Heart right ventricle (tissue), 16 donors: ENCODE measurements at regions of chr19 and their contacts with region 1.

Region 1: GRCh38 chr19:14054721-14055120 is 7.2 kb downstream of the PALM3 start:
- DNase-seq: no peak
- ATAC-seq: peak in 1 of 8 donors; percentile 10
- H3K4me3 ChIP-seq: no peak overlapping the region
- H3K27ac ChIP-seq: no peak overlapping the region
- H3K4me1 ChIP-seq: peaks cover 0 to 17% (median 5%) of the 10 kb centered on the region in 9 donors
- H3K27me3 ChIP-seq: peaks cover 0 to 34% (median 22%) of the 10 kb centered on the region in 7 donors
- CTCF ChIP-seq: no peak

Region 2: DNA sequence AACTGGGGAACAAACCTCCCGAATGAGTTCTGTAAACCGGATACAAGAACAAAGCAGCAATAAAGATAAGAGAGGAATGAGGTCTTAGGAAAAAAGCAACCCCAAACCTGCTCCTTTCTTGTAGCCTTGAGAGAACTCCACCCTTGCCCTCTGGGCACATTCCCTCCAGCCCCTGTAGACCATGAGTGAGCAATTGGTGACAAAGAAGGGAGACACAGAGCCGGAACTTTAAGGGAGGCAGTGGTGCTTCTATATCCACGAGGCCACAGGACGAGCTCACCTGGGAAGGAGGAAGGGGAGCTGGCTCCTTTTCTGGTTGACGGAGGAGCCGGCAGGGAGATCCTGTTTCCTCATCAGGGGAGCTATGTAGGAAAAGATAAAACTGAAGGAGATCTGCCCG is 161.9 kb before region 1 on chr19:
- intact Hi-C with region 1: loop called in 3 of 10 experiments (anchors 5 to 10 kb)
- DNase-seq: no peak
- ATAC-seq: no peak
- H3K4me3 ChIP-seq: no peak overlapping the region
- H3K27ac ChIP-seq: no peak overlapping the region
- H3K4me1 ChIP-seq: no peaks in the 10 kb centered on the region
- H3K27me3 ChIP-seq: no peaks in the 10 kb centered on the region
- CTCF ChIP-seq: no peak

Region 3: GRCh38 chr19:14147797-14148605 is 93.3 kb after region 1 on chr19:
- intact Hi-C with region 1: no loop called
- DNase-seq: peak; percentile 74 to 79
- ATAC-seq: peak; percentile 84 to 91 (median 86)
- H3K4me3 ChIP-seq: peak overlapping the region in 2 of 10 donors; percentile 24 to 33
- H3K27ac ChIP-seq: peak overlapping the region; percentile 25 to 90 (median 86)
- H3K4me1 ChIP-seq: peaks cover 2 to 47% (median 32%) of the 10 kb centered on the region in 9 donors
- H3K27me3 ChIP-seq: no peaks in the 10 kb centered on the region
- CTCF ChIP-seq: peak; percentile 77 to 95 (median 89)